PC-3 (cell line): ENCODE measurements at regions of chr10 and their contacts with region 1.

Region 1: DNA sequence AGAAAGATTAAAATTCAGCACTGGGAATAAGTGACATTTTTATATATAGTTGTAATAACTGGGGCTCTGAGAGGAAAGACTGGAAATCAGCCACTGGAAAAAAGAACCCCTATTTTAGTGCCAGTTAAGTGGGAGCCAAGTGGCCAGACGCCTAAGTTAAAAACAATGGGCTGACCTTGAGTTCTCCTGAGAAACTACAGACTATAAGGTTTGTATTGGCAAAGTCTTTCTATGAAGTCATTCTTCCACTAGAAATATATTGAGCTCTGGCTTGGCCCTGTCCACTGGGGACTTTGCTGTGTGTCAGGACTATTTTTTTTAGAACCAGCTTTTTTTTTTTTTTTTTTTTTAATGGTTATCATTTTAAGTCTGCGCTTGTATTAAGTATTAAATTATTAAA is 210.6 kb upstream of the FZD8 start:
- DNase-seq: no peak
- ATAC-seq: no peak
- H3K4me3 ChIP-seq: no peak overlapping the region
- H3K27ac ChIP-seq: no peak overlapping the region
- H3K4me1 ChIP-seq: peaks cover 13% of the 10 kb centered on the region
- H3K27me3 ChIP-seq: no peaks in the 10 kb centered on the region
- CTCF ChIP-seq: no peak

Region 2: GRCh38 chr10:35822316-35822715 is 30.4 kb before region 1 on chr10:
- CTCF ChIA-PET with region 1: no interaction called
- POLR2A ChIA-PET with region 1: no interaction called
- intact Hi-C with region 1: no loop called
- DNase-seq: peak; percentile 36
- ATAC-seq: peak; percentile 49; the same call in 1 of the 2 replicates
- H3K4me3 ChIP-seq: no peak overlapping the region
- H3K27ac ChIP-seq: no peak overlapping the region
- H3K4me1 ChIP-seq: no peaks in the 10 kb centered on the region
- H3K27me3 ChIP-seq: no peaks in the 10 kb centered on the region
- CTCF ChIP-seq: no peak; the same call in 1 of the 2 replicates

Region 3: GRCh38 chr10:35835545-35835944 is 17.2 kb before region 1 on chr10:
- CTCF ChIA-PET with region 1: no interaction called
- POLR2A ChIA-PET with region 1: interaction called, 12 read pairs
- intact Hi-C with region 1: no loop called
- DNase-seq: no peak
- ATAC-seq: no peak
- H3K4me3 ChIP-seq: no peak overlapping the region
- H3K27ac ChIP-seq: no peak overlapping the region
- H3K4me1 ChIP-seq: no peaks in the 10 kb centered on the region
- H3K27me3 ChIP-seq: no peaks in the 10 kb centered on the region
- CTCF ChIP-seq: no peak